Caco-2 (cell line): ENCODE measurements at regions of chr1 and their contacts with region 1.

Region 1: GRCh38 chr1:226128487-226129075 is 58.0 kb downstream of the ACBD3 start:
- DNase-seq: peak; percentile 66 to 78
- H3K4me3 ChIP-seq: no peak overlapping the region
- H3K4me3 Mint-ChIP-seq: peak overlapping the region; percentile 66
- H3K27ac Mint-ChIP-seq: peak overlapping the region; percentile 95
- H3K4me1 ChIP-seq: peaks cover 25% of the 10 kb centered on the region
- H3K4me1 Mint-ChIP-seq: peaks cover 31% of the 10 kb centered on the region
- H3K27me3 ChIP-seq: no peaks in the 10 kb centered on the region
- H3K27me3 Mint-ChIP-seq: no peaks in the 10 kb centered on the region
- CTCF ChIP-seq: no peak

Region 2: DNA sequence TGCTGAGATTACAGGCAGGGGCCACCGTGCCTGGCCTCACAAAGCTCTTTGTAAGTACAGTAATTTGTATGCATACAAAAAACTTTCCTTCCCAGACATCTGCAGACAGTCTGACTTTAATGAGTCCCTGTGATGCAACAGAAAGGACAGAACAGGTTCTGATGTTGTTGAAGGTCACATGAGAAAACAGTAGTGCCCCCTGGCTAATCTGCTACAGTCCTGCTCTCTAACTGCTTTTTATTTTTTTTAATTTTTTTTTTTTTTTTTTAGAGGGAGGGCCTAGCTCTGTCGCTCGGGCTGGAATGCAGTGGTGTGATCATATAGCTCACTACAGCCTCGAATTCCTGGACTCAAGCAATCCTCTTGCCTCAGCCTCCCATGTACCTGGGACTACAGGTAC is 21.2 kb after region 1 on chr1:
- CTCF ChIA-PET with region 1: interaction called, 19 read pairs
- POLR2A ChIA-PET with region 1: interaction called, 11 read pairs
- intact Hi-C with region 1: loop called (anchors 1 kb)
- DNase-seq: peak; percentile 56 to 69
- H3K4me3 ChIP-seq: no peak overlapping the region
- H3K4me3 Mint-ChIP-seq: no peak overlapping the region
- H3K27ac Mint-ChIP-seq: no peak overlapping the region
- H3K4me1 ChIP-seq: no peaks in the 10 kb centered on the region
- H3K4me1 Mint-ChIP-seq: peaks cover 7% of the 10 kb centered on the region
- H3K27me3 ChIP-seq: no peaks in the 10 kb centered on the region
- H3K27me3 Mint-ChIP-seq: no peaks in the 10 kb centered on the region
- CTCF ChIP-seq: peak in 1 of 2 experiments; percentile 25